Ovary (tissue), 10 donors: ENCODE measurements at regions of chr12 and their contacts with region 1.

Region 1: DNA sequence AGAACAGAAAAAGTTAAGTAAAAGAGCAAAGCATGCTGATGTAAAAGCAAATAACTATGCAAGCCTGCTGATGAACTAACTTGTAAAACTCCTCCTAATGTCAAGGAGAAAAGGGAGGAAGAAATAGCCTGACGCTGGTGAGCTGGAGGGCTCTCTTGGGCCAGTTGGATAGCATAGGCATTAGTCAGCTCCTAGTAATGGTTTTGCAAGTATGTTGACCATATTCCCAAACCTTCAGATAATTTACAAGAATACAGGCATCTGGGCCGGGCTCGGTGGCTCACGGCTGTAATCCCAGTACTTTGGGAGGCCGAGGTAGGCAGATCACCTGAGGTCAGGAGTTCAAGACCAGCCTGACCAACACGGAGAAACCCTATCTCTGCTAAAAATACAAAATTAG is 871.4 kb downstream of the C12orf50 start:
- DNase-seq: no peak
- H3K4me3 ChIP-seq: no peak overlapping the region
- H3K27ac ChIP-seq: no peak overlapping the region
- H3K4me1 ChIP-seq: no peaks in the 10 kb centered on the region
- H3K27me3 ChIP-seq: no peaks in the 10 kb centered on the region
- CTCF ChIP-seq: no peak
- EP300 ChIP-seq: no peak
- POLR2A ChIP-seq: no peak

Region 2: DNA sequence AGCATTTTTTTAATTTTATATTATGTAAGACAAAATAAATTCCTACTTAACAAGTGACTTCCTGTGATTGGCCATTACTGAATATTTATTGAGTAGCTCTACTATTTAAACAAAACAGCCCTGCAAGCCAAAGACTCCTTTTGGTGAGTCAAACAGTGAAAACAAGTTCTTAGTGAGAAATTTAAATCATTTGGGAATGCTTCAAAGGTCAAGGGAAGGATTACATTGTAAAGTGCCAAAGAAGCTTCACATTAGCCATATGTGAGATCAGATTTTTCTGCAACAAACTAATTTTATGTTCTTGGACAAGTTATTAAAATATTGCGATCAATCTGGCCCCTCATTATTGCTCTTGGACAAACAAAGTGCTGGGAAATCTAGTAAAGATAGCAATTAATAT is 106.2 kb before region 1 on chr12:
- intact Hi-C with region 1: no loop called
- DNase-seq: no peak
- H3K4me3 ChIP-seq: no peak overlapping the region
- H3K27ac ChIP-seq: no peak overlapping the region
- H3K4me1 ChIP-seq: no peaks in the 10 kb centered on the region
- H3K27me3 ChIP-seq: no peaks in the 10 kb centered on the region
- CTCF ChIP-seq: no peak
- EP300 ChIP-seq: no peak
- POLR2A ChIP-seq: no peak

Region 3: DNA sequence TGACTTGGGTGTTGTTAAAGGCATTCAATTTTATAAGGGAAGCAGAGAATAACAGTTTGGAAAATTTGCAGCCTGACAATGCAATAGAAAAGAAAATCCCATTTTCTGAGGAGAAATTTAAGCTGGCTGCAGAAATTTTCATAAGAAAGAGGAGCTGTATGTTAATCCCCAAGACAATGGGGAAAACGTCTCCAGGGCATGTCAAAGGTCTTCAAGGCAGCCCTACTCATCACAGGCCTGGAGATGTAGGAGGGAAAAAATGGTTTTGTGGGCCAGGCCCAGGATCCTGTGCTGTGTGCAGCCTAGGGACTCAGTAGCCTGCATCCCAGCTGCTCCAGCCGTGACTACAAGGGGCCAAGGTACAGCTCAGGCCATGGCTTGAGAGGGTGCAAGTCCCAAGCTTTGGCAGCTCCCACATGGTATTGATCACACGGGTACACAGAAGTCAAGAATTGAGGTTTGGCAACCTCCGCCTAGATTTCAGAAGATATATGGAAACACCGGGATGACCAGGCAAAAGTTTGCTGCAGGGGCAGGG is 25.0 kb after region 1 on chr12:
- intact Hi-C with region 1: loop called in 1 of 4 experiments (anchors 1 kb)
- DNase-seq: no peak
- H3K4me3 ChIP-seq: no peak overlapping the region
- H3K27ac ChIP-seq: no peak overlapping the region
- H3K4me1 ChIP-seq: no peaks in the 10 kb centered on the region
- H3K27me3 ChIP-seq: no peaks in the 10 kb centered on the region
- CTCF ChIP-seq: no peak
- EP300 ChIP-seq: no peak
- POLR2A ChIP-seq: no peak